ENCODE measurements at regions of chrX and their contacts with region 1.

Region 1: GRCh38 chrX:24024819-24025740 is 1.9 kb downstream of the KLHL15 start:
- DNase-seq: peak; percentile 89 to 93
- ATAC-seq: peak; percentile 91 to 97 (median 92)
- H3K4me3 ChIP-seq: peak overlapping the region; percentile 85
- H3K27ac ChIP-seq: peak overlapping the region; percentile 92
- H3K4me1 ChIP-seq: no peaks in the 10 kb centered on the region
- H3K27me3 ChIP-seq: peaks cover 0 to 15% (median 0%) of the 10 kb centered on the region in 3 donors
- CTCF ChIP-seq: peak; percentile 33

Region 2: DNA sequence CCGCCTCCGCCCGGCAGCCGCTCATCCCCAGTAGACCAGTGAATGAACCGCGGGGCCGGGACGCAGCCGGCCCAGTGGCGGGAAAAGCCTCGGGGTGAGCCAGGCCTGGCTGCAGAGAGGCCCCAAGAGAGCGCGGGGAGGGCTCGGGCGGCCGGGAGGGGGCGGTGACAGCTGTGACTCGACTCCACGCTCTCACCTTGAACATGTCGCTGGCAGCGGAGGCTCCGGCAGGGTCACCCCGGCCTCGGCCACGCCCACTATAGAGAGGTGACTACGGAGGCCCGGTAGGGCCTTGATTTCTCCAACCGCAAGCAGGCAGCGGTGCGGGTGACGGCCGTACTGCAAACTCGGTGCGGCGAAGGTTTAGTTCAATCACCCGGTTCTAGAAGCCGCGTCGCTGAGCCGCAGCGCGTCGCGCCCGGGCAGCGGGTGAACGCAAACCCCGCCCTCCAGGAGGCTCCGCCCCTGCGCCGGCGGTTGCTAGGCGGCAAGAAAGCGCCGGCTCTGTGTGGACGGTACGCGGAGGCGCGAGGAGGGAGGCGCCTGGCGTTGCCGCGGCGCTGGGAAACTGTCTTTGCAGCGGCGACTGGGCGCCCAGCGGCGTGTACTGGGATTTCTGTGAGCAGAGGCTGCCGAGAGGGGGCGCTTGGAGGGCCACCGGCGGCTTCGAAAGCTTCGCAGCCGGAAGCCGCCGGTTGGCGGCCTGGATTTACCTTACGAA is 117.4 kb before region 1 on chrX and contains the starts of genes APOO and CXorf58:
- intact Hi-C with region 1: loop called in 1 of 2 experiments (anchors 5 kb)
- DNase-seq: peak; percentile 90 to 96
- ATAC-seq: peak; percentile 96 to 98 (median 97)
- H3K4me3 ChIP-seq: peak within 1 kb of the TSS; percentile 76
- H3K27ac ChIP-seq: peak within 1 kb of the TSS; percentile 82
- H3K4me1 ChIP-seq: no peaks in the 10 kb centered on the region
- H3K27me3 ChIP-seq: peaks cover 0 to 7% (median 0%) of the 10 kb centered on the region in 3 donors
- CTCF ChIP-seq: peak; percentile 72
- total RNA-seq, gene APOO: 29.7 to 78.5 (median 56.4) TPM
- total RNA-seq, gene CXorf58: 0.17 to 0.50 TPM in 2 of 4 donors, not detected in the others

Region 3: GRCh38 chrX:24054182-24055042 is 29.3 kb after region 1 on chrX and contains the start of gene EIF2S3:
- intact Hi-C with region 1: loop called in 1 of 2 experiments (anchors 1 kb)
- DNase-seq: peak; percentile 92 to 95
- ATAC-seq: peak; percentile 96 to 97 (median 97)
- H3K4me3 ChIP-seq: no peak within 1 kb of the TSS
- H3K27ac ChIP-seq: peak within 1 kb of the TSS; percentile 92
- H3K4me1 ChIP-seq: no peaks in the 10 kb centered on the region
- H3K27me3 ChIP-seq: no peaks in the 10 kb centered on the region
- CTCF ChIP-seq: peak; percentile 73
- total RNA-seq, gene EIF2S3: 96.6 to 130 (median 112) TPM

Measured in psoas muscle (tissue), 8 donors.